Activated CD4-positive, alpha-beta memory T cell treated with anti-CD3 and anti-CD28 coated beads for 36 hours (primary cell): ENCODE measurements at regions of chr14 and their contacts with region 1.

Region 1: DNA sequence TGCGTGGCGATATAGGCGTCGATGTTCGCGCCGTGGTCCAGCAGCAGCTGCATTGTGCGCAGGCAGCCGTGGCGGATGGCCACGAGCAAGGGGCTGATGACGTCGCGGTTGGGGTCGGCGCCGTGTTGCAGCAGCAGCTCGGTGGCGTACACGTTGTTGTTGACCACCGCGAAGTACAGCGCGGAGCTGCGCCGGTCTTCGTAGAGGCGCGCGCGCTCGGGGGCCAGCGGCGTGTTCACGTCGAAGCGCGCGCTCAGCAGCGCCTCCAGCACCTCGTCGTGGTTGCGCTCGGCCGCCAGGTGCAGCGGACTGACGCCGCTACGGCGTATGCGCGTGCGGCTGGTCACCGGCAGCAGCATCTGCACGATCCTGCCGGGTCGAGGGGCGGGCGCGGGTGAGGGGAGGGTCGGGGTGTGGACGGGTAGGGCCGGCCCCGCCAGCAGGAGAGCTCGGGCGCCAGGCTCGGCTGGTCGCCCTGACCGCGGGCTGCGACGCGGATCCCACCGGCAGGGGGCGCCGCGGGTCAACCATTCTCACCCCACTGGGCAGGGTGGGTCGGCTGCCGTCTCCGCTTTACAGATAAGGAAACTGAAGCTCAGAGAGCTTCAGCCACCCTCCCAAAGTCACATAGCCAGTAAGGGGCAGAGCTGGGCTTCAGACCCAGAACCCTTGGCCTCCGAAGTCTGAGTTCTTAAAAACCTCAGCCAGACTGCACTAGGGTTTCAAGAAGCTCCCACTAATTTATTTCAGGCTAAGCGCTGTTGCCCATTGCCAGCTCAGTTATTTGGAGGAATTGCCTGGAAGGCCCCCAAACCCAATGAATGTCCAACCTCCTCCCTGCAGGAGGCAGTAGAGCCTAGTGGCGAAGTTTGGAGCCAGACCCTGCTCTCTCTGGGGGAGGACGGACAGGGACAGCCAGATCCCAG is 12.4 kb downstream of the FAM181A start:
- DNase-seq: peak; percentile 94
- H3K4me3 Mint-ChIP-seq: peak overlapping the region; percentile 61
- H3K27ac Mint-ChIP-seq: peak overlapping the region; percentile 56
- H3K4me1 Mint-ChIP-seq: peaks cover 13% of the 10 kb centered on the region
- H3K27me3 Mint-ChIP-seq: no peaks in the 10 kb centered on the region

Region 2: GRCh38 chr14:93970549-93970946 is 31.0 kb after region 1 on chr14:
- CTCF ChIA-PET with region 1: interaction called, 425 read pairs
- POLR2A ChIA-PET with region 1: interaction called, 17 read pairs
- intact Hi-C with region 1: loop called (anchors 1 kb)
- DNase-seq: peak; percentile 82
- H3K4me3 Mint-ChIP-seq: peak overlapping the region; percentile 74
- H3K27ac Mint-ChIP-seq: peak overlapping the region; percentile 96
- H3K4me1 Mint-ChIP-seq: peaks cover 78% of the 10 kb centered on the region
- H3K27me3 Mint-ChIP-seq: no peaks in the 10 kb centered on the region

Region 3: DNA sequence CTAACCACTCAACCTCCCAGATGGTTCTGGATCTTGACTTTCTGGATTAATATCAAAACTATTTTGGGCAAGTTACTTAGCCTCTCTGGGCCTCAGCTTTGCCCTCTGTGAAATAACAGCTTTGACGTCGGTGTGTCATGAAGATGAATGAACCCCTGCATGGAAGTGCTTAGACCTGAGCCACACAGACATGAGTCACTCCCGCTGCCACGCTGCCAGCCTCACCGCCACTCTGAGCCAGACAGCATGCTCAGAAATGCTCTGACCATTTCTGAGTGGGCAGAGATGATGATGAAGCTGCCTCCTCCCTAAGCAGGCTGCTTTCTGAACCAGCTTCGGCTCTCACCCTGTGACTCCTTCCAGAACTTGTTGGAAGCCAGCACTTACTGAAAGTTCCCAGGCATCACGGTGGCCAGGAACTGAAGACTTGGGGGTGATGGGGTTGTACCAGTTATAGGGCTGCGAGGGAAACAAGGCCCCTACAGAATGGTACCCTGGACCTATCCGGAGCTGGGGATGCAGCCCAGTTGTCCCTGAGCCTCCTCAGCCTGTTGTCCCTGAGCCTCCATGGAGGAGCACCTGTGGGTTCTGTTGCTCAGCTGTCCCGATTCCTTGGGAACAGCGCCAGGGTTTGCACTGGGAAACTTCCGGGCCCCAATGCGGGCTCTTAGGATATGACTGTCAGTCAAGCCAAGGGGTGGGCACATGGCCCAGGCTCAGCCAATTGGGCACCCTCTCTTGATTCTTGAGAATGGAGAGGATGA is 55.5 kb after region 1 on chr14:
- CTCF ChIA-PET with region 1: interaction called, 309 read pairs
- POLR2A ChIA-PET with region 1: interaction called, 10 read pairs
- intact Hi-C with region 1: no loop called
- DNase-seq: peak; percentile 86
- H3K4me3 Mint-ChIP-seq: no peak overlapping the region
- H3K27ac Mint-ChIP-seq: peak overlapping the region; percentile 54
- H3K4me1 Mint-ChIP-seq: peaks cover 35% of the 10 kb centered on the region
- H3K27me3 Mint-ChIP-seq: no peaks in the 10 kb centered on the region

Region 4: GRCh38 chr14:94021001-94021400 is 81.4 kb after region 1 on chr14:
- CTCF ChIA-PET with region 1: interaction called, 202 read pairs
- POLR2A ChIA-PET with region 1: interaction called, 6 read pairs
- intact Hi-C with region 1: no loop called
- DNase-seq: peak; percentile 36
- H3K4me3 Mint-ChIP-seq: no peak overlapping the region
- H3K27ac Mint-ChIP-seq: peak overlapping the region; percentile 70
- H3K4me1 Mint-ChIP-seq: peaks cover 31% of the 10 kb centered on the region
- H3K27me3 Mint-ChIP-seq: no peaks in the 10 kb centered on the region

Region 5: DNA sequence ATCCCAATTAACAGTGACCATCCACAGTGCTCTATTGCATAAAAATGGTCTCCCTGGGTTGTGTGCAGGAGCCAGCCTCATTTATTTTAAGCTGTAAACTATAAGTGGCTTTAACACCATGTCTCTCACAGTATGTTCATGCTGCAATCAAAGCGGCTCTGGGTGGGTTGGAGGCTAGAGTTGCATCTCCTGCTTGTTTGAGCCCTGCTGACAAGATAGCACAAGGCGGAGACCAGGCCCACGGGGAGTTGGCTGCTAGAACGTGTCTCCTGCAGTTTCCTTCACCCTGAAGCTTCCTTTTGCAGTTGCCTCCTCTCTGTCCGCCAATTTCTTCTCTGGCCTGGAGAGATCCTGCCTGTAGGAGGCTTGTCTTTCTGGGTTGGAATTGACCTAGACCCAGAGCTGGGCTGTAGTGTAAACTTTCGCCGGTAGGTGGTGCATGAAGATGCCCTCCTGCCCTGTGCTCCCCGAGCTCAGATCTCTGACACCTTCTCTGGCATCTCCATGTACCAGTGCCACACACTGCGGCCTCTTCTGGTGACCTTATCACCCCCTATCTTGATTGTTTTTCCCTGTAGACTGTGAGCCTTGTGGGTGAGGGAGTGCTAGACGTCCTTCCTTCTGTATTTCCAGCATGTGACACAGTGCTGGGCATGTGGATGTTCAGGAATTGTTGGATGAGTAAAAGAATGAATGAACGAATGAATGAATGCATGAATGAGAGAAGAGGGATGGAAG is 96.9 kb after region 1 on chr14:
- CTCF ChIA-PET with region 1: interaction called, 35 read pairs
- POLR2A ChIA-PET with region 1: no interaction called
- intact Hi-C with region 1: no loop called
- DNase-seq: peak; percentile 88
- H3K4me3 Mint-ChIP-seq: no peak overlapping the region
- H3K27ac Mint-ChIP-seq: no peak overlapping the region
- H3K4me1 Mint-ChIP-seq: peaks cover 3% of the 10 kb centered on the region
- H3K27me3 Mint-ChIP-seq: no peaks in the 10 kb centered on the region

Region 6: DNA sequence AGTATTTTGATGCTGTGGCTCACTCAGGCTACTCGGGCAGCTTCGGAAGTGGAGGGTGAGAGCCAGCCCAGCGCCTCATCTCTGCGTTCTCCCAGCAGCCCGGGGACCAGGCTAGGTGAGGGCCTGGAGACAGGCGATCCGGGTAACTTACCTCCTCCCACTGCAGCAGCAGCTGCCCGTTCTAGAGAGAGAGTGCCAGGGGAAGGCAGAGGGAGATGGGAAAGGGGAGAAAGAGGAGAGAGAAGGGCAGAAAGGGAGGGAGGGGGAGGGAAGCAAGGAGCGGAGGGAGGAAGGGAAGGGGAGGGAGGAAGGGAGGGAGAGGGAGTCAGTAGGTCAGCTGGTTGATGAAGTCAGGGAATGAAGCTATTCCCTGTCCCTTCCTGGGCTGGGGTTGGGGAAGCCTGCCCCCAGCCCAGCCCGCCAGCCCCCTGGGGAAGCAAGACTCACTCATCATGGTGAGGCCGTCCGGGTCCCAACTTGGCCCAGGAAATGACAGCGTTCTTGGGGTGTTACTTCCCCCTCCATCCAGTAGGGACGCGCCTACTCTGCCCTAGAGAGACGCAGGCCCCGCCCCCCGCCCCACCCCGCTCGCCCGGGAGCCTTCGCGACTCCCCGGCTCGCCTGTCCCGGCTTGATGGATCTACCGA is 189.7 kb after region 1 on chr14 and contains the start of gene IFI27L2:
- CTCF ChIA-PET with region 1: interaction called, 11 read pairs
- POLR2A ChIA-PET with region 1: no interaction called
- intact Hi-C with region 1: no loop called
- DNase-seq: peak; percentile 85
- H3K4me3 Mint-ChIP-seq: peak within 1 kb of the TSS; percentile 85
- H3K27ac Mint-ChIP-seq: peak within 1 kb of the TSS; percentile 76
- H3K4me1 Mint-ChIP-seq: peaks cover 12% of the 10 kb centered on the region
- H3K27me3 Mint-ChIP-seq: no peaks in the 10 kb centered on the region
- total RNA-seq, gene IFI27L2: 69.3 to 74.4 TPM